ENCODE measurements at regions of chr6 and their contacts with region 1.

Region 1: DNA sequence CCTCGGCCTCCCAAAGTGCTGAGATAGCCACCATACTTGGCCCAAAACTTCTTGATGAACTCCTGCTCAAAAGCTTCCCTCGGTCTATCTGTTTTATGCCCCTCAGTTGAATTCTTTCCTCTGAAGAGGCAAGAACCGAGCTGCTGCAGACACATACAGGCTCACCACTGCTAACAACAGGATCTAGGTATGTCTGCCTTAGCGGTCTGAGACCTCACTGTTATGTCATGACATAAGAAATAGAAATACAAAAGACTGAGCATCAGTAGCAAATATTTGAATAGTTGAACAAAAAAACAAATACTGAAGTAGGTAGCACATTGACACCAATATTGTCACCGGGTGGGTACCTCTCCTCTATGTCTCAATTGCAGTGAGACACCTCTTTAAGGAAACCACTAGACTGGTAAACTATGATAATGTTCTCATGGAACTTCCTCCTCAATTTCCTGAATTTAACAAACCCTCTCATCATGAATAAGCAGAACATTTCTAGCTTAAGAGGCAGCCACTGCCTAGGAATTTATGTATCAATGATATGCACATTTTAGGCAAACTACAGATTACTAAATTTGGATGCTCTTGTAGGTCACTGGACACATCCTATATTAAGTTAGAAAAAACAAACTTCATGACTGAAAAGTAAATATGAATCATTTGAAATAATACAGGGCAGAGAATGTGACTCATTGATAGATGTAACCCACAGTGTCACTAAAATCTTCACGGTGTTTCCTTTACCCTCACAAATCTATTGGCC is 9.4 kb upstream of the STXBP5 start:
- DNase-seq: no peak
- H3K4me3 Mint-ChIP-seq: peak overlapping the region; percentile 9
- H3K27ac Mint-ChIP-seq: peak overlapping the region; percentile 85
- H3K4me1 Mint-ChIP-seq: peaks cover 15% of the 10 kb centered on the region
- H3K27me3 Mint-ChIP-seq: no peaks in the 10 kb centered on the region

Region 2: DNA sequence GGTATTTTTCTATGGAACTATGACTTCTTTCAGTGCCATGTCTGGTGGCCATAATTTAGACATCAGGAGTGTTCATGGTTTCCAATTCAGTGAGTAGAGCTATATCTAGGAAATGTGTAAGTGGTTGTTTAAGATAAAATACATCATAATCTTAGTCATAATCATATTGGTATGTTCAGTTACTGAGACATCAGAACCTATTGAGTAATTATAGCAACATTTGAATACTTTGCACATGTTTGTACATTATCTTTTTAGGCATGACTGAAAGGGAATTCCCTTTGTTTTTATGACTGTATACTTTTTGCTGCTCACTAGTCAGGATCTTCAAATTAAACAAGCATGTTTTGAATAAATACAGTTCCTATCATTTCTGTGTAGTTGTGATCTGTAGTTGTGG is 73.4 kb after region 1 on chr6:
- intact Hi-C with region 1: loop called (anchors 1 kb)
- DNase-seq: no peak
- H3K4me3 Mint-ChIP-seq: no peak overlapping the region
- H3K27ac Mint-ChIP-seq: peak overlapping the region; percentile 28
- H3K4me1 Mint-ChIP-seq: peaks cover 16% of the 10 kb centered on the region
- H3K27me3 Mint-ChIP-seq: no peaks in the 10 kb centered on the region